ENCODE measurements at regions of chr10 and their contacts with region 1.

Region 1: GRCh38 chr10:125982260-125982948 is 86.0 kb downstream of the FANK1 start:
- DNase-seq: peak in 1 of 2 donors; percentile 88
- H3K4me3 ChIP-seq: no peak overlapping the region
- H3K27ac ChIP-seq: no peak overlapping the region
- H3K4me1 ChIP-seq: peaks cover 0 to 4% (median 0%) of the 10 kb centered on the region in 4 donors
- H3K27me3 ChIP-seq: peaks cover 0 to 3% (median 0%) of the 10 kb centered on the region in 3 donors
- CTCF ChIP-seq: peak in 4 of 7 experiments; percentile 27 to 69 (median 56)
- EP300 ChIP-seq: no peak
- POLR2A ChIP-seq: no peak

Region 2: GRCh38 chr10:126387023-126387921 is 404.9 kb after region 1 on chr10:
- intact Hi-C with region 1: loop called (anchors 10 kb)
- DNase-seq: peak; percentile 56 to 85
- H3K4me3 ChIP-seq: peak overlapping the region; percentile 45 to 61 (median 50)
- H3K27ac ChIP-seq: peak overlapping the region in 1 of 5 donors; percentile 44
- H3K4me1 ChIP-seq: peaks cover 6 to 22% (median 20%) of the 10 kb centered on the region in 4 donors
- H3K27me3 ChIP-seq: peaks cover 0 to 40% (median 31%) of the 10 kb centered on the region in 3 donors
- CTCF ChIP-seq: peak in 5 of 7 experiments; percentile 33 to 60 (median 50)
- EP300 ChIP-seq: no peak
- POLR2A ChIP-seq: no peak

Region 3: DNA sequence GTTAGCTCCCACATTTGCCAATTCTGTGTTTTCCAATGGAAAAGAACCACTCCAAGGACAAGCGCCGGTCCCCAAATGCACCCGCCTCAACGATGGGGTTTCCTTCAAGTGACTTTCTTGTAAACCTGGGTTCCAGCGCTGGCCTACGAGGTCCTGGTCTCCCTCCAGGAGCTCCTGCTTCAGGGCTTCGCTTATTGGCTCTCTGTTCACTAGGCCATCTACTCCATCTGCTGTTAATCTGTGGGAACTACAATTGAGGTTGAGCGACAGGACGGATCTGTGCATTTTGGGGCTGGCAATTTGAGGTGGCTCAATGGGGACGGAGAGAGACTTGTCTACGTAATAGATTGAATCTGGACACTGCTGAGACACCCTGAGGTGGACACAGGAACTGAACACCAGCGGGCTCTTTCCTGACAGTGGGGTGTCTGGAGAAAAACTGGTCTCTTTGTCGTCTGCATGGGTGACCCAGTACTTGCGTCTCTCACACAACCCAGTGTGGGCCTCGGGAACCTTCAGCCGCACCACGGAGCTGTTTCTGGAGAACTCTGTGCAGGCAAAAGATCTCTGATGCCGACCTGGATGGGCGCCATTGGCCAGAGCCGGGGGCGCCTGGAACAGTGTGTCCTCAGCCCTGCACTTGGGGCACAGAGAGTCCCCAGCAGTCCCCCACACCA is 521.8 kb after region 1 on chr10:
- intact Hi-C with region 1: loop called (anchors 10 kb)
- DNase-seq: peak in 1 of 2 donors; percentile 77
- H3K4me3 ChIP-seq: no peak overlapping the region
- H3K27ac ChIP-seq: no peak overlapping the region
- H3K4me1 ChIP-seq: no peaks in the 10 kb centered on the region
- H3K27me3 ChIP-seq: no peaks in the 10 kb centered on the region
- CTCF ChIP-seq: peak in 5 of 7 experiments; percentile 28 to 49 (median 44)
- EP300 ChIP-seq: no peak
- POLR2A ChIP-seq: no peak

Region 4: GRCh38 chr10:126749015-126749655 is 766.7 kb after region 1 on chr10:
- intact Hi-C with region 1: loop called (anchors 10 kb)
- DNase-seq: peak; percentile 85 to 88
- H3K4me3 ChIP-seq: no peak overlapping the region
- H3K27ac ChIP-seq: no peak overlapping the region
- H3K4me1 ChIP-seq: no peaks in the 10 kb centered on the region
- H3K27me3 ChIP-seq: no peaks in the 10 kb centered on the region
- CTCF ChIP-seq: peak in 5 of 7 experiments; percentile 33 to 71 (median 57)
- EP300 ChIP-seq: no peak
- POLR2A ChIP-seq: no peak

Measured in stomach (tissue), 19 donors.